Mucosa of descending colon (tissue), 3 donors: ENCODE measurements at regions of chr5 and their contacts with region 1.

Region 1: GRCh38 chr5:135560858-135561257 is 17.9 kb downstream of the CXCL14 start:
- DNase-seq: peak in 2 of 3 donors; percentile 84 to 92
- ATAC-seq: peak; percentile 96
- H3K4me3 ChIP-seq: no peak overlapping the region
- H3K4me1 ChIP-seq: no peaks in the 10 kb centered on the region
- CTCF ChIP-seq: peak; percentile 81

Region 2: DNA sequence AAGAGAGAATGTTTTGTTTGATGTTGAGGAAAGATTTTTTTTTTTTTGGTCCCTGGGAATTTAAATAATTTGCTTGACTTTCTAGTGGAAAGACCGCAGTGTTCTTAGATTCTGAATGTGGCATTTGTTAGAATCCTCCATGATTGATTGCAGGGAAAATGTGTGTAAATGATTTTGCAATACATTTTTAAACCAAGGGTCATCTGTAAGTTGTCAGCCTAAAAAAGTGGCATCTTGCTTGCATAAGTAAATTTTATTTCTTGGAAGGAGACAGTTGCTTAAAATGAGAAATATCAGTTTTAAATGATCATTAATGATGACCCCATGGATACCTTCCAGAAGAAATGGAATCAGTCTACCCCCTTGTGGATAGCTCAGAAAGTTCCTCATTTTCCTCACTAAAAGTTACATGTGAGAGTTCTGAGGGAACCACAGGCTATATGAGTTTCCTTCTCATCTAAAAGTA is 168.5 kb after region 1 on chr5:
- intact Hi-C with region 1: loop called in 1 of 2 experiments (anchors 10 kb)
- DNase-seq: no peak
- ATAC-seq: no peak
- H3K4me3 ChIP-seq: no peak overlapping the region
- H3K4me1 ChIP-seq: no peaks in the 10 kb centered on the region
- CTCF ChIP-seq: no peak

Region 3: GRCh38 chr5:135977375-135977928 is 416.6 kb after region 1 on chr5:
- intact Hi-C with region 1: no loop called
- DNase-seq: peak; percentile 74 to 86 (median 76)
- ATAC-seq: peak; percentile 98
- H3K4me3 ChIP-seq: no peak overlapping the region
- H3K4me1 ChIP-seq: no peaks in the 10 kb centered on the region
- CTCF ChIP-seq: peak; percentile 73